Adrenal gland (tissue), 19 donors: ENCODE measurements at regions of chr1 and their contacts with region 1.

Region 1: GRCh38 chr1:200620273-200621131 is at the start of gene KIF14:
- DNase-seq: peak; percentile 92 to 97 (median 95)
- H3K4me3 ChIP-seq: peak within 1 kb of the TSS in 3 of 4 donors; percentile 7 to 59 (median 48)
- H3K27ac ChIP-seq: peak within 1 kb of the TSS; percentile 10 to 73 (median 63)
- H3K4me1 ChIP-seq: peaks cover 14 to 29% of the 10 kb centered on the region in 2 donors
- H3K27me3 ChIP-seq: no peaks in the 10 kb centered on the region
- CTCF ChIP-seq: peak in 1 of 6 experiments; percentile 9
- POLR2A ChIP-seq: peak in 1 of 2 donors; percentile 40
- total RNA-seq, gene KIF14: 0.11 to 3.5 (median 0.36) TPM

Region 2: GRCh38 chr1:200400556-200400955 is 219.9 kb before region 1 on chr1:
- intact Hi-C with region 1: no loop called
- DNase-seq: no peak
- H3K4me3 ChIP-seq: no peak overlapping the region
- H3K27ac ChIP-seq: no peak overlapping the region
- H3K4me1 ChIP-seq: peaks cover 0 to 7% of the 10 kb centered on the region in 2 donors
- H3K27me3 ChIP-seq: no peaks in the 10 kb centered on the region
- CTCF ChIP-seq: no peak
- POLR2A ChIP-seq: no peak

Region 3: DNA sequence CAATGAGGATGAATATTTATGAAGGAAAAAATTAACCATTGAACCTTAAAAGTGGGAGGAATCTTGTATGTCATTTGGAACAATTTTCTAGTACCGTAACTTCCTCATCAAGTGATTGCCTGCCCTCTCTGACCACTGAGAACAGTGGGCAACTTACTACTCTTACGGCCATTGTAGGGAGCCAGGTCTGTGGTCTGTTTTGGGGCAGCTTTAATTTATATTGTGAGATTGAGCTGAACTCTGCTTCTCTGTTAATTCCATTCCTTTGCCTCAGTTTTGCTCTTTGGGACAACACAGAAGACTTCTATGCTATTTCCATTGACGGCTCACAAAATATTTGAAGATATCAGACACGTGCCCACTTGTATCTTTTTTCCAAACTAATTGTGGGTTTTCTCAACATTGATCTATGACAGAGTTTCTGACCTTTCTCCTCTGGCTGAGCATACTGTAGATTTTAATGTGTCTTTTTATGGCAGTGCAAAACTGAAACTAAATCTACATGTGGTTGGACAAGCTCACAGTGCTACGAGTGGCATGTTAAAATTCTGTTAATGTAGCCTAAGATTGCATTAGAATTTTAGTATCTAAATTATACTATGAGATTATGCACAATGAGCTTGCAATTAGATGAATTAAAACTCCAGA is 182.8 kb before region 1 on chr1:
- intact Hi-C with region 1: no loop called
- DNase-seq: no peak
- H3K4me3 ChIP-seq: peak overlapping the region in 1 of 4 donors; percentile 3
- H3K27ac ChIP-seq: no peak overlapping the region
- H3K4me1 ChIP-seq: no peaks in the 10 kb centered on the region
- H3K27me3 ChIP-seq: no peaks in the 10 kb centered on the region
- CTCF ChIP-seq: no peak
- POLR2A ChIP-seq: no peak

Region 4: DNA sequence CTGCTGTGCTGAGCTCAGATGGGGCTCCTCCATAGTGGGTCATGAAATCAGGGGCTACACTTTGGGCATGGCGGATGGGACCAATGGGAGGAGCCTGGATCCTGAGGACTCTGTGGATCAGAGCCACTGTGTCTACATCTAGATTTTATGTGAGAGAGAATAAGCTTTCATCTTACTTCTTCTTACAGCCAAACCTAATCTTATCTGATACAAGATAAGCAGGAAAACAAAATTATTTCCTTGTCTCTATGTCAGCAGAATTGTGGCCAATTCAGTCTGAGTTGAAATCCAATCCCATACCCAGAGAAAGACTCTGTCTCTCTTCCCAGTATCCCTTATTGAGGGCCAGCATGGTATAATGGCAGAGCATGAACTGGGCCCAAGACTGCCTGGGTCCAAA is 56.2 kb before region 1 on chr1:
- intact Hi-C with region 1: no loop called
- DNase-seq: no peak
- H3K4me3 ChIP-seq: no peak overlapping the region
- H3K27ac ChIP-seq: no peak overlapping the region
- H3K4me1 ChIP-seq: no peaks in the 10 kb centered on the region
- H3K27me3 ChIP-seq: no peaks in the 10 kb centered on the region
- CTCF ChIP-seq: no peak
- POLR2A ChIP-seq: no peak

Region 5: DNA sequence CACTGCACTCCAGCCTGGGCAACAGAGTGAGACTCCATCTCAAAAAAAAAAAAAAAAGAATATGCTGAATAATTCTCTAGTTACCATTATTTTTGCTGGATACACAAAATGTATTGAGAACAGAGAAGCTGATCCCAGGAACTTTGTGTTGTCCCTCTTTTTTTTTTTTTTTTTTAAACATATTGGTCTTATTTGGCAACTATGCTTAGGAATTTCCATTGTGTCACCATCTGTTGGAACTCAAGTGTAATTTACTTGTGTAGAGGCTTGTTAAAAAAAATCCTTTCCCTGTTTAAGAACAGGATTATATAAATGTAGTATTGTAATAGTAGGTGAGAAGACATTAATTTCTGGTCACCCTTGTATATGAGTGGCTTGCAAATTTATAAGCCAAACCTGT is 146.8 kb after region 1 on chr1:
- intact Hi-C with region 1: no loop called
- DNase-seq: no peak
- H3K4me3 ChIP-seq: no peak overlapping the region
- H3K27ac ChIP-seq: no peak overlapping the region
- H3K4me1 ChIP-seq: no peaks in the 10 kb centered on the region
- H3K27me3 ChIP-seq: no peaks in the 10 kb centered on the region
- CTCF ChIP-seq: no peak
- POLR2A ChIP-seq: no peak

Region 6: GRCh38 chr1:200802865-200803512 is 182.5 kb after region 1 on chr1:
- intact Hi-C with region 1: loop called (anchors 5 to 10 kb)
- DNase-seq: peak; percentile 68 to 95 (median 84)
- H3K4me3 ChIP-seq: no peak overlapping the region
- H3K27ac ChIP-seq: peak overlapping the region in 2 of 5 donors; percentile 2 to 7
- H3K4me1 ChIP-seq: peaks cover 0 to 25% of the 10 kb centered on the region in 2 donors
- H3K27me3 ChIP-seq: no peaks in the 10 kb centered on the region
- CTCF ChIP-seq: peak; percentile 86 to 96 (median 94)
- POLR2A ChIP-seq: no peak